Pancreas (tissue), 10 donors: ENCODE measurements at regions of chr16 and their contacts with region 1.

Region 1: GRCh38 chr16:29961479-29962343 is at the start of gene TMEM219:
- DNase-seq: peak; percentile 82 to 96 (median 94)
- ATAC-seq: peak; percentile 95 to 99 (median 98)
- H3K4me3 ChIP-seq: peak within 1 kb of the TSS; percentile 53 to 85 (median 79)
- H3K27ac ChIP-seq: peak within 1 kb of the TSS; percentile 58 to 90 (median 84)
- H3K4me1 ChIP-seq: peaks cover 0 to 7% (median 6%) of the 10 kb centered on the region in 3 donors
- H3K27me3 ChIP-seq: no peaks in the 10 kb centered on the region
- CTCF ChIP-seq: peak; percentile 36 to 53 (median 42)
- total RNA-seq, gene TMEM219: 58.3 to 79.8 (median 68.1) TPM

Region 2: DNA sequence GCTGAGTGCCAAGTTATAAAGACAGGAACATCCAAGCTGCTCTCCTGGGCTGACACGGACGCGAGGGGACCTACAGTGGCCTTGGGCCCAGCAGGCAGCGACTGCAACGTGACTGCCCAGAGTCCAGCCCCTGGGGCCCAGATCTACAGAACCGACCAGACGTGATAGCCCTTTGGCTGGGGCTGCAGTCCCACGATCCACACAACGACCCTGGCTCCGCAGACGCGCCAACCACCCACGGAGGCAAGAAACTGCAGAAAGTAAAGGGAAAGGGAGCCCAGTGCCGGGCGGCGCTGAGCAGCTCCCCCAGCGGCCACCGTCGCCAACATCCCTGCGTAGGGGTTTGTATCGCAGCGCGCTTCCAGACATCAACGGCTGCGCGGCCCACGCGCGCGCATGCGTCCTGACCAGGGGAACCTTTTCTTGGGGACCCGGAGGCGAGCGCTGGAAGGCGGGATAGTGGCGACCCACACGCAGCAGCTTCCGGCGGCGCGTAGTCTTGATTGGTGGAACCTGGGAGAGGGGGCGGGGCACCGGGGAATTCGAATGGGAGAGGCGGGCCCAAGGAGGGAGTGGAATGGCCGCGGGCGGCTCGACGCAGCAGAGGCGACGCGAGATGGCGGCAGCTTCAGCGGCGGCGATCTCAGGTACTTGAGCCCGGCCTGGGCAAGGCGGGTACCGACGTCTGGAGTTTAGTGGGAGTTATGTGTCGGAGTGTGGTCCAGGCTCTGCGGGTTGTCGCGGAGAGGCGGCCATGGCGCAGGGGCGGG is 171.3 kb before region 1 on chr16 and contains the start of gene KIF22:
- intact Hi-C with region 1: no loop called
- DNase-seq: peak; percentile 98 to 100 (median 99)
- ATAC-seq: peak; percentile 97 to 99 (median 98)
- H3K4me3 ChIP-seq: peak within 1 kb of the TSS; percentile 80 to 97 (median 94)
- H3K27ac ChIP-seq: peak within 1 kb of the TSS; percentile 78 to 92 (median 84)
- H3K4me1 ChIP-seq: peaks cover 4 to 12% (median 9%) of the 10 kb centered on the region in 3 donors
- H3K27me3 ChIP-seq: no peaks in the 10 kb centered on the region
- CTCF ChIP-seq: peak; percentile 41 to 68 (median 58)
- total RNA-seq, gene KIF22: 7.7 to 17.4 (median 11.0) TPM

Region 3: DNA sequence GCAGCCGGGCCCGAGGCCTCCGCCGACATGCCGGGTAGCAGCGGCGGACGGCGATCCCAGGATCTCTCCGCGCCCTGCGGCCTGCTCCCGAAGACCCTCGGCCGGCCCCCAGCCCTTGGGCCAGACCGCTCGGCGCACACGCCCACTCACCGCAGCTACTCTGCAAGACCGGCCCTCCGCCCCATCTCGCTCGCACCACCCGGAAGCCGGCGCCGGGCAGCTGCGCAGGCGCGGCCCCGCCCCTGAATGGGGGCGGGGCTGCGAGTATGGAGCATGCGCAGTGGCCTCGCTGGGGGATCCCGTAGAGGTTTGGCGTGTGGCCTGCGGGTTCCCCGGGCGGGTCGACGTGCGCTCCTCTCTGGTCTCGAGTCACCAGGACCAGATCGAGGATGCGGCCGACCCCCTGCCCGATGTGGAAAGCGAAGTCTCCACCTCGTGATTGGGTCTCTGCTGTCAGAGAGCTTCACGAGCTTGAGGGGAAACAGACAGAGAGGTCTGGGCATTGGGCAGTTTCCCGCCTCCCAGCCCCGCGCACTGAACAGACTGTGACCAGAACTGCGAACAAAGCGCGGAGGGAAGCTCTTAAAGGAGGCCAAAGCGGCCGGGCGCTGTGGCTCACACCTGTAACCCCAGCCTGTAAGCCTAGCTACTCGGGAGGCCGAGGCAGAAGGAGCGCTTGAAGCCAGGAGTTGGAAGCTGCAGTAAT is 35.6 kb before region 1 on chr16 and contains the start of gene KCTD13:
- intact Hi-C with region 1: loop called in 1 of 3 experiments (anchors 5 kb)
- DNase-seq: peak; percentile 74 to 97 (median 90)
- ATAC-seq: peak; percentile 95 to 99 (median 96)
- H3K4me3 ChIP-seq: peak within 1 kb of the TSS; percentile 92 to 100 (median 100)
- H3K27ac ChIP-seq: peak within 1 kb of the TSS; percentile 70 to 90 (median 86)
- H3K4me1 ChIP-seq: peaks cover 0 to 16% (median 13%) of the 10 kb centered on the region in 3 donors
- H3K27me3 ChIP-seq: no peaks in the 10 kb centered on the region
- CTCF ChIP-seq: no peak
- total RNA-seq, gene KCTD13: 7.7 to 15.8 (median 9.0) TPM